OCI-LY7 (cell line): ENCODE measurements at regions of chr14 and their contacts with region 1.

Region 1: DNA sequence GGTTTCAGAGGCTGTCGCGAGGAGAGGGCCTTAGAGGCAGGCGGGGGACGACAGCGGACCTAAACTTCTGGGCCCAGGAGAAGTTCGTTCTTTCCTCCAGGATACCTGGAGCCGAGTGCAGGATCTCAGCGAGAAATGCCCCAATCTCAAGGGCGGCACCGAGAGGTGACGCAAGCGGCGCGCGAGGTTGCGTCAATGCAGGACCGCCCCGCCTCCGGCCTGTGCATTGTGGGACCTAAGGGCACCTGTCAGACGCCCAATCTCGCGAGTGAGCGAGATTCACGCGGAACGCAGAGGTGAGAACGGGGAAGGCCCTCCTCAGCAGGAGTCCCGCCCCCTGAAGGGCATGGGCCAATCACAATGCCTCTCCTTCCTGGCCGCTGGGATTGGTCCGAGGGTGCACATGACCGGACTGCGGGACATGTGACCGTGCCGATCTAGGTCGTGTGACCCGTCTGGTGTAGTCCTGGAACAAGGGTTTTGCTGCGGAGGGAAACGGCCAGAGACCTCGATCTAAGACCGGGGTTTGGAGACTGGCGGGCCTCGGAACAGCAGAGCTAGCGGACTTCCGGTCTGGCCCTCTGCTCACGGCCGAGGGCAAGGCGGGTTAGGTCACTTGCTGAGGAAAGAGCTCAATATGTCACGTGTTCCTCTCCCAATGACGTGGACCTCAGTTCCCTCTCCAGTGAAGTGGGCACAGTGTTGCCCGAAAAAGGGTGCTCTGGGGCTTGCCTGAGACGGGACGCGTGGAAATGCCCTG is 16.3 kb upstream of the DYNC1H1 start:
- DNase-seq: peak; percentile 100
- H3K4me3 ChIP-seq: peak overlapping the region; percentile 82
- H3K27ac ChIP-seq: peak overlapping the region; percentile 49
- H3K4me1 ChIP-seq: peaks cover 9% of the 10 kb centered on the region
- CTCF ChIP-seq: no peak

Region 2: DNA sequence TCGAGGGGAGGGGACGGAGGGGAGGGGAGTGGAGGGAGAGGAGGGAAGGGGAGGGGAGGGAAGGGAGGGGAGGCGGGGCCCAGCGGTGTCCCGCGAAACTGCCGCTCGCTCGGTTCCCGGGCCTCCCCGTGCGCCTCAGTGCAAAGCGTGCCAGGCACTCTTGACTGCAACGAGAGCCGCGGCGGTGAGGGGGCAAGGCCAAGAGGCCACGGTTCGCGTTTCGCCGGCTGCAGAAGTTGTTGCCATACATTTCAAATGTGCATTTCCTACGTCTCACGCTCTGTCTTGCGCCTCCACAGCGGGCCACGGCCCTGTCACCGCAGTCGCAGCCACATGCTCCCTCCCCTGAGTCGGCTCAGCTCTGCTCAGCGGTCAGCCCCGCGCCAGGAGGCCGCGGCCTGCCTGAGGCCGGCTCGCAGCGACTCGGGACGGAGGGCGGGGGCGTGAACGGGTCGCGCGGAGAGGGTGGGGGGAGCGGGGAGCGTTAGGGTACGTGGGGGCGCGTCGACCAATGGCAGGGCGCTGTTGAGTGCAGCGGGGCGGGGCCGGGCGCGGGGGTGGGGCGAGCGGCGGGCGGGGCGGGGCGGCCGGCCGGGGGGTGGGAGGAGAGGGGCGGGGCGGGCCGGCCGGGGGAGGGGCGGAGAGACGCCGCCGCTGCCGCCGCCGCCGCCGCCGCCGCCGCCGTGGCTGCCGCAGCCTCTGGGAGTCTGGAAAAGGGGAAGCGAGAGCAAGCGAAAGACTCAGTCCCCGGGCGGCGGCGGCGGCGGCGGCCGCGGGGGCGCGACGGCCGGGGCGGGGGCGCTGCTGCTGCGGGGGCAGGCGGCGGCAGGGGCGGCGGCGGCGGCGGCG is 186.8 kb before region 1 on chr14 and contains the start of gene PPP2R5C:
- CTCF ChIA-PET with region 1: no interaction called
- POLR2A ChIA-PET with region 1: interaction called, 4 read pairs
- intact Hi-C with region 1: loop called (anchors 1 kb)
- DNase-seq: peak; percentile 90
- H3K4me3 ChIP-seq: peak within 1 kb of the TSS; percentile 100
- H3K27ac ChIP-seq: peak within 1 kb of the TSS; percentile 69
- H3K4me1 ChIP-seq: peaks cover 15% of the 10 kb centered on the region
- CTCF ChIP-seq: no peak
- total RNA-seq, gene PPP2R5C: 134 and 161 TPM in 2 replicates

Region 3: DNA sequence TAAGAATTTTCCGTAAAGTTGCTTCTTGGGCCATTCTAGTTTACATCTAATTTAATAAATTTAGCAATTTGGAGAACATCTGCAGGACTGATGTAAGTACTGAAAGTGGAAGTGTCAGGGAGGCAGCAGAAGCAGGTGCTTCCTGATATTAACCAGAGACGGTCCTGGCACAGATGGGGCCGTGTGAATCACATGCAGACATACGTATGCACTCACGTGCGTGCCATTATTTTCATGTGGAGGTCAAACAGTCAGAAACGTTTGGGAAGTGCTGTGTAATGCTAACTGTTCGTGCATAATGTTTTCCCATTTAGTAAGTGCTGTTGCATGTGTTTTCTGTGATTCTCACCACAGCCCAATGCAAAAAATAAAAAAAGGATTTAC is 71.5 kb before region 1 on chr14:
- CTCF ChIA-PET with region 1: no interaction called
- POLR2A ChIA-PET with region 1: no interaction called
- intact Hi-C with region 1: loop called (anchors 1 kb)
- DNase-seq: peak; percentile 97
- H3K4me3 ChIP-seq: peak overlapping the region; percentile 63
- H3K27ac ChIP-seq: peak overlapping the region; percentile 98
- H3K4me1 ChIP-seq: peaks cover 74% of the 10 kb centered on the region
- CTCF ChIP-seq: no peak

Region 4: GRCh38 chr14:102131746-102132145 is 183.7 kb after region 1 on chr14:
- CTCF ChIA-PET with region 1: no interaction called
- POLR2A ChIA-PET with region 1: no interaction called
- intact Hi-C with region 1: no loop called
- DNase-seq: no peak
- H3K4me3 ChIP-seq: no peak overlapping the region
- H3K27ac ChIP-seq: no peak overlapping the region
- H3K4me1 ChIP-seq: no peaks in the 10 kb centered on the region
- CTCF ChIP-seq: no peak